CD8-positive, alpha-beta T cell (primary cell): ENCODE measurements at regions of chr3 and their contacts with region 1.

Region 1: GRCh38 chr3:172511783-172512762 is 11.2 kb downstream of the TNFSF10 start:
- DNase-seq: peak; percentile 18 to 64 (median 39)
- ATAC-seq: peak; percentile 41
- H3K4me3 ChIP-seq: peak overlapping the region in 1 of 2 experiments; percentile 24
- H3K4me3 Mint-ChIP-seq: peak overlapping the region; percentile 55
- H3K27ac ChIP-seq: peak overlapping the region in 1 of 2 experiments; percentile 34
- H3K27ac Mint-ChIP-seq: peak overlapping the region; percentile 73
- H3K4me1 ChIP-seq: peaks cover 37% of the 10 kb centered on the region
- H3K4me1 Mint-ChIP-seq: peaks cover 56% of the 10 kb centered on the region
- H3K27me3 ChIP-seq: no peaks in the 10 kb centered on the region
- H3K27me3 Mint-ChIP-seq: no peaks in the 10 kb centered on the region
- CTCF ChIP-seq: no peak

Region 2: GRCh38 chr3:172522871-172523818 is 11.1 kb after region 1 on chr3 and contains the start of gene TNFSF10:
- CTCF ChIA-PET with region 1: no interaction called
- POLR2A ChIA-PET with region 1: interaction called, 3 read pairs
- intact Hi-C with region 1: loop called in 1 of 2 experiments (anchors 1 kb)
- DNase-seq: peak; percentile 15 to 81 (median 51)
- ATAC-seq: peak; percentile 76
- H3K4me3 ChIP-seq: peak within 1 kb of the TSS; percentile 70 to 76
- H3K4me3 Mint-ChIP-seq: peak within 1 kb of the TSS; percentile 96
- H3K27ac ChIP-seq: peak within 1 kb of the TSS; percentile 66 to 87
- H3K27ac Mint-ChIP-seq: peak within 1 kb of the TSS; percentile 98
- H3K4me1 ChIP-seq: peaks cover 26% of the 10 kb centered on the region
- H3K4me1 Mint-ChIP-seq: peaks cover 53% of the 10 kb centered on the region
- H3K27me3 ChIP-seq: no peaks in the 10 kb centered on the region
- H3K27me3 Mint-ChIP-seq: no peaks in the 10 kb centered on the region
- CTCF ChIP-seq: no peak
- total RNA-seq, gene TNFSF10: 3.6 to 4.1 TPM

Region 3: DNA sequence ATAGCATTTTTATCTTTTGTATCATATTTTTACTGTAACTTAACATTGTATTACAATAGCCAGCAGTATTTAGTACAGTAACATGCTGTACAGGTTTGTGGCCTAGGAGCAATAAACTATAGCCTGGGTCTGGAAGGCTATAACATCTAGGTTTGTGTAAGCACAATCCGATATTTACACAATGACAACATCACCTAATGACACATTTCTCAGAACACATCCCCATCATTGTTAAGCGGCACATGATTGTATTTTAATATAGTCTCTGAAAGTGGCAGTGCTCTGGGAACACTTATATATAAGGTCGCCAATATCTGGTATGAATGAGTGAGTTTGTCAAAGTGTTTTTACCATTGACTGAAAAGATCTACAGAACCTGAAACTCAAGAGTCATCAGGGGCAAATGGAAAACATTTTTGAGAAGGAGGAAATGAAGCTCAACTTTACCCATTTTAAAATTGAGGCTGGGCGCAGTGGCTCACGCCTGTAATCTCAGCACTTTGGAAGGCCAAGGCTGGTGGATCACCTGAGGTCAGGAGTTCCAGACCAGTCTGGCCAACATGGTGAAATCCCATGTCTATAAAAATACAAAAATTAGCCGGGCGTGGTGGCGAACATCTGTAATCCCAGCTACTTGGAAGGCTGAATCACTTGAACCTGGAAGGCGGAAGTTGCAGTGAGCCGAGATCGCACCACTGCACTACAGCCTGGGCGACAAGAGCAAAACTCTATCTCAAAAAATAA is 50.0 kb after region 1 on chr3:
- CTCF ChIA-PET with region 1: no interaction called
- POLR2A ChIA-PET with region 1: no interaction called
- intact Hi-C with region 1: loop called in 1 of 2 experiments (anchors 1 kb)
- DNase-seq: no peak
- ATAC-seq: no peak
- H3K4me3 ChIP-seq: no peak overlapping the region
- H3K4me3 Mint-ChIP-seq: no peak overlapping the region
- H3K27ac ChIP-seq: no peak overlapping the region
- H3K27ac Mint-ChIP-seq: no peak overlapping the region
- H3K4me1 ChIP-seq: no peaks in the 10 kb centered on the region
- H3K4me1 Mint-ChIP-seq: peaks cover 18% of the 10 kb centered on the region
- H3K27me3 ChIP-seq: no peaks in the 10 kb centered on the region
- H3K27me3 Mint-ChIP-seq: no peaks in the 10 kb centered on the region
- CTCF ChIP-seq: no peak

Region 4: GRCh38 chr3:172606021-172606420 is 93.9 kb after region 1 on chr3:
- CTCF ChIA-PET with region 1: no interaction called
- POLR2A ChIA-PET with region 1: no interaction called
- intact Hi-C with region 1: no loop called
- DNase-seq: no peak
- ATAC-seq: no peak
- H3K4me3 ChIP-seq: no peak overlapping the region
- H3K4me3 Mint-ChIP-seq: no peak overlapping the region
- H3K27ac ChIP-seq: no peak overlapping the region
- H3K27ac Mint-ChIP-seq: no peak overlapping the region
- H3K4me1 ChIP-seq: no peaks in the 10 kb centered on the region
- H3K4me1 Mint-ChIP-seq: no peaks in the 10 kb centered on the region
- H3K27me3 ChIP-seq: no peaks in the 10 kb centered on the region
- H3K27me3 Mint-ChIP-seq: peaks cover 2% of the 10 kb centered on the region
- CTCF ChIP-seq: no peak